Ovary (tissue), 10 donors: ENCODE measurements at regions of chr6 and their contacts with region 1.

Region 1: DNA sequence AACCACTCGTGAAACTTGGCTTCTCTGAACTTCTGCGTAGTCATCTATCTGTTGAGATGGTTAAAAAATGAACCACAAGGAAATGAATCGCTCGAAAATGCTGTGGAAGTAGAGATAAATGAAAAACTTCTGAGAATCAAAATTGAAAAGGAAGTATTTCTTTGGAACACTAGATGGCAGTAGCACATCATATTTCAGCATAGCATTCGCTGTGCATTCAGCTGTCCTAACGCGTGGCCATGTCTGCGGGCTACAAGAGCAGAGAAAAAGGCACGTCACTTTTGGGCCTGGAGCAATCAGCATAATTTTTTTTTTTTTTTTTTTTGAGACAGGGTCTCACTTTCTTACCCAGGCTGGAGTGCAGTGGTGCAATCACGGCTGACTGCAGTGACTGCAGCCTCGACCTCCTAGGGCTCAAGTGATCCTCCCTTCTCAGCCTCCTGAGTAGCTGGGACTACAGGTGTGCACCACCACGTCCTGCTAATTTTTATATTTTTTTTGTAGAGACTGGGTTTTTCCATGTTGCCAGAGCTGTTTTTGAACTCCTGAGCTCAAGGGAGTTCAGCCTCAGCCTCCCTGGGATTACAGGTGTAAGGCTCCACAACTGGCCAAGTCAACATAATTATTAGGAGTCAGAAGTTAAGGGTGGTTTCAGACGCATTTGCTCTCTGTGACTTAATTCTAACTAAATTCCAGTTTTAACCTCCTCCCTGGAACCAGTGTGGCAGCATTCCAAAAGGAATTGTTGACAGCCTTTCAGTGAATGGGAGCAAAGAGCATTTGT is 8.8 kb upstream of the PERP start:
- DNase-seq: peak; percentile 19 to 45 (median 38)
- H3K4me3 ChIP-seq: no peak overlapping the region
- H3K27ac ChIP-seq: no peak overlapping the region
- H3K4me1 ChIP-seq: no peaks in the 10 kb centered on the region
- H3K27me3 ChIP-seq: no peaks in the 10 kb centered on the region
- CTCF ChIP-seq: peak; percentile 42 to 80 (median 59)
- EP300 ChIP-seq: no peak
- POLR2A ChIP-seq: no peak

Region 2: GRCh38 chr6:138099832-138100231 is 16.2 kb before region 1 on chr6:
- intact Hi-C with region 1: loop called in 1 of 4 experiments (anchors 1 kb)
- DNase-seq: no peak
- H3K4me3 ChIP-seq: no peak overlapping the region
- H3K27ac ChIP-seq: no peak overlapping the region
- H3K4me1 ChIP-seq: no peaks in the 10 kb centered on the region
- H3K27me3 ChIP-seq: no peaks in the 10 kb centered on the region
- CTCF ChIP-seq: no peak
- EP300 ChIP-seq: no peak
- POLR2A ChIP-seq: no peak

Region 3: DNA sequence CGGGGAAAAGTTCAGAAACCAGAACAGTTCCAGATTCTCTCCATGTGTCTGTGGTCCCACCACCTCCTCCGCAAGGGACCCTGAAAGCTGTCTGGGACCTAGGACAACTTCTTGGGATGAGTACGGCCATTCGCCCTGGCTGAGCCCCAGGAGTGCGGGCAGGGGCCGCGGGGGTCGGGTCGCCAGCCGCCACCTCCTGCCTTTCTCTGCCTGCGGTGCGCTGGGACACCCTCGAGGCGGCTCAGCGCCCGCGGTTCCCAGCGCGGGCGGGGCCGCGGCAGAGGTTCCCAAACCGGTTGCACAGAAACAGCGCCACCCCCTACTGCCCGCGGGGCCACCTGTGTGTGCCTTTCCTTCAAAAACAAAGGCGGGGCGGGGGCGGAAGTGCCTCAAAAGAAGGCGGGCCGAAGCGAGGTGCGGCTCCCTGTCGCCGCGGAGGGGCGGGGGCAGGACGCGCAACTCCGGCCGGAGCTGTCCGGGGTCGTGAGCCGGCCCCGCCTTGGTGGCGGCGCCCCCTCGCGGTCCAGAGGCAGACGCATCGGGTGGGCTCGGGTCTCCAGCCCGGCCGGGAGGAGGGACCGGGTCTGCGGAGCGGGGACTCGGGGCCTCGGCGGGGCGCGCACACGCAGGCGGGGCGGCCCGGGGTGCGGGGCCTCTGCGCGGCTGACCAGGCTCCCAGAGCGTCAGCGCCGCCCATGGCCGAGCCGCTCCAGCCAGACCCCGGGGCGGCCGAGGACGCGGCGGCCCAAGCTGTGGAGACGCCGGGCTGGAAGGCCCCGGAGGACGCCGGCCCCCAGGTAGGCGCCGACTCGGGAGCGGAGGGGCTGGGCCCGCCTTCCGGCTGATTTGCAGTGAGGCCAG is 288.0 kb after region 1 on chr6 and contains the start of gene HEBP2:
- intact Hi-C with region 1: loop called in 1 of 4 experiments (anchors 10 kb)
- DNase-seq: peak; percentile 91 to 93 (median 92)
- H3K4me3 ChIP-seq: peak within 1 kb of the TSS; percentile 95
- H3K27ac ChIP-seq: peak within 1 kb of the TSS; percentile 82 to 98
- H3K4me1 ChIP-seq: peaks cover 3% of the 10 kb centered on the region
- H3K27me3 ChIP-seq: no peaks in the 10 kb centered on the region
- CTCF ChIP-seq: peak; percentile 29 to 86 (median 78)
- EP300 ChIP-seq: no peak
- POLR2A ChIP-seq: peak; percentile 52
- total RNA-seq, gene HEBP2: 44.1 to 64.8 (median 44.4) TPM

Region 4: GRCh38 chr6:138517635-138518034 is 401.6 kb after region 1 on chr6:
- intact Hi-C with region 1: loop called in 2 of 4 experiments (anchors 10 kb)
- DNase-seq: peak in 4 of 5 donors; percentile 11 to 37 (median 25)
- H3K4me3 ChIP-seq: no peak overlapping the region
- H3K27ac ChIP-seq: no peak overlapping the region
- H3K4me1 ChIP-seq: no peaks in the 10 kb centered on the region
- H3K27me3 ChIP-seq: no peaks in the 10 kb centered on the region
- CTCF ChIP-seq: peak in 2 of 3 donors; percentile 8 to 25
- EP300 ChIP-seq: no peak
- POLR2A ChIP-seq: no peak

Region 5: GRCh38 chr6:138588805-138589434 is 472.9 kb after region 1 on chr6:
- intact Hi-C with region 1: loop called in 3 of 4 experiments (anchors 2 to 10 kb)
- DNase-seq: peak; percentile 23 to 62 (median 45)
- H3K4me3 ChIP-seq: no peak overlapping the region
- H3K27ac ChIP-seq: no peak overlapping the region
- H3K4me1 ChIP-seq: peaks cover 1% of the 10 kb centered on the region
- H3K27me3 ChIP-seq: no peaks in the 10 kb centered on the region
- CTCF ChIP-seq: peak; percentile 57 to 68 (median 62)
- EP300 ChIP-seq: no peak
- POLR2A ChIP-seq: no peak